IMR-90 (cell line): ENCODE measurements at regions of chr5 and their contacts with region 1.

Region 1: GRCh38 chr5:134724872-134725271 is 13.5 kb upstream of the CAMLG start:
- DNase-seq: no peak
- ATAC-seq: no peak
- H3K4me3 ChIP-seq: no peak overlapping the region
- H3K27ac ChIP-seq: no peak overlapping the region
- H3K4me1 ChIP-seq: no peaks in the 10 kb centered on the region
- H3K27me3 ChIP-seq: no peaks in the 10 kb centered on the region
- CTCF ChIP-seq: no peak
- POLR2A ChIP-seq: no peak
- RAD21 ChIP-seq: no peak

Region 2: GRCh38 chr5:134662971-134663370 is 61.9 kb before region 1 on chr5:
- CTCF ChIA-PET with region 1: no interaction called
- POLR2A ChIA-PET with region 1: no interaction called
- dilution Hi-C with region 1: no loop called
- in situ Hi-C with region 1: no loop called
- intact Hi-C with region 1: loop called (anchors 5 kb)
- DNase-seq: no peak
- ATAC-seq: no peak
- H3K4me3 ChIP-seq: no peak overlapping the region
- H3K27ac ChIP-seq: no peak overlapping the region
- H3K4me1 ChIP-seq: no peaks in the 10 kb centered on the region
- H3K27me3 ChIP-seq: no peaks in the 10 kb centered on the region
- CTCF ChIP-seq: no peak
- POLR2A ChIP-seq: no peak
- RAD21 ChIP-seq: no peak